Endothelial cell of umbilical vein (primary cell): ENCODE measurements at regions of chr7 and their contacts with region 1.

Region 1: GRCh38 chr7:141654551-141654950 is 47.4 kb downstream of the DENND11 start:
- DNase-seq: peak; percentile 94
- H3K4me3 ChIP-seq: no peak overlapping the region
- H3K27ac ChIP-seq: peak overlapping the region; percentile 46
- H3K4me1 ChIP-seq: peaks cover 16% of the 10 kb centered on the region
- H3K27me3 ChIP-seq: no peaks in the 10 kb centered on the region
- CTCF ChIP-seq: peak; percentile 81
- POLR2A ChIP-seq: no peak

Region 2: DNA sequence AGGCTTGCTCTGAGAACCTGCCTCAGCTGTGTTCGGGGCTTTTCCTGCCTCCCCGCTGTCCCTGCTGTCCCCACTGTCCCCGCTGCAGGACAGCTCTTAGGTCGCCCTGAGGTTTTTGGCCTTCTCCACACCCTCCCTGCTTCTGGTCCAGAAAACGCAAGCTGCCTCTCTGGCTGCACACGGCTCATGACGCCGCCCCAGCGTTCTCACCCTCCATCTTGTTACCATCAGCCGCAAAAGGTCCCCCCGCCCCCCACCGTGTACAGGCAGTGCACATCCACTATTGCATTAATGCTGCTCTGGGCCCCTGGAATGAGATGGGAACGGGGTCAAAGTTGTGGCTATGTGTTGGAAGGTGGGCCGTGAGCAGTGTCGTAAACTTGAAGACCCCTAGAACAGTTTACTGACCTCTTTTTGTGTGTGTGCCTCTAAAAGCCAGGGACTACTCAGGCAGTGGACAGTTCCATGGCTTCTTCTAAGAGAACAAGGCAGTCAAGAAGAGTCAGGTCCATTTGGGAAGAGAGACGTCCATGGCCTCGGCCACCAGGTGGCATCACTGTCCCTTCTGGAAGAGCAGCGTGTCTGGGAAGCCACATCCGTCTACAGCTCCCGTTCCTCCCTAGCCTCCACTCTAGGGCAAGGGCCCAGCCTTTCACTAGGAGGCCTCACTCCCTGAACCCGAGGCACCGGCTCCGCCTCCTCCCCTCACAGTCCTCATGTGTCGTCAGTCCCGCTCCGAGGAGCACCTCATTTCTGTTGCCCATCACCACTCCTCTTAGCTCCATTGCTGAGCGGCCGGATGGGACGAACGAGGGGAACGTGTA is 1136.8 kb before region 1 on chr7:
- CTCF ChIA-PET with region 1: interaction called, 11 read pairs
- POLR2A ChIA-PET with region 1: no interaction called
- dilution Hi-C with region 1: no loop called
- intact Hi-C with region 1: loop called (anchors 1 kb)
- DNase-seq: peak; percentile 79
- H3K4me3 ChIP-seq: no peak overlapping the region
- H3K27ac ChIP-seq: no peak overlapping the region
- H3K4me1 ChIP-seq: no peaks in the 10 kb centered on the region
- H3K27me3 ChIP-seq: no peaks in the 10 kb centered on the region
- CTCF ChIP-seq: peak; percentile 77 to 92
- POLR2A ChIP-seq: no peak

Region 3: GRCh38 chr7:140810830-140811556 is 843.6 kb before region 1 on chr7:
- CTCF ChIA-PET with region 1: interaction called, 51 read pairs
- POLR2A ChIA-PET with region 1: no interaction called
- dilution Hi-C with region 1: no loop called
- intact Hi-C with region 1: loop called (anchors 1 kb)
- DNase-seq: peak; percentile 77
- H3K4me3 ChIP-seq: no peak overlapping the region
- H3K27ac ChIP-seq: no peak overlapping the region
- H3K4me1 ChIP-seq: peaks cover 2% of the 10 kb centered on the region
- H3K27me3 ChIP-seq: no peaks in the 10 kb centered on the region
- CTCF ChIP-seq: peak; percentile 62 to 65
- POLR2A ChIP-seq: no peak

Region 4: DNA sequence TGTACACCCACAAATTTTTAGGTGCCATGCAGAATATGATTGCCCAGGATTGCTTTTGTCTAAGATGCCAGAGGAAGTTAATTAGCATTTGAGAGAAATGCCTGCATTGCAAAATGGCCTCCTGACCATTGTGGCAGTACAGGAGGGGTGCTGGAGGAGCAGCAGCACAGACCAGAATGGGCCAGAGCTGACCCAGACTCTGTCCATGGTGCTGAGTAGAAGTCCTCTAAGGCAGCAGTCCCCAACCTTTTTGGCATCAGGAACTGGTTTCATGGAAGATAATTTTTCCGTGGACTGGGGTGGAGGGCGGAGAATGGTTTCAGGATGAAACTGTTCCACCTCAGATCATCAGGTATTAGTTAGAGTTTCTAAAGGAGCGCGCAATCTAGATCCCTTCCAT is 321.1 kb before region 1 on chr7:
- CTCF ChIA-PET with region 1: no interaction called
- POLR2A ChIA-PET with region 1: no interaction called
- dilution Hi-C with region 1: no loop called
- intact Hi-C with region 1: no loop called
- DNase-seq: no peak
- H3K4me3 ChIP-seq: no peak overlapping the region
- H3K27ac ChIP-seq: no peak overlapping the region
- H3K4me1 ChIP-seq: no peaks in the 10 kb centered on the region
- H3K27me3 ChIP-seq: no peaks in the 10 kb centered on the region
- CTCF ChIP-seq: no peak
- POLR2A ChIP-seq: no peak

Region 5: GRCh38 chr7:141533149-141533949 is 121.2 kb before region 1 on chr7:
- CTCF ChIA-PET with region 1: interaction called, 23 read pairs
- POLR2A ChIA-PET with region 1: no interaction called
- dilution Hi-C with region 1: no loop called
- intact Hi-C with region 1: loop called (anchors 1 kb)
- DNase-seq: peak; percentile 67
- H3K4me3 ChIP-seq: no peak overlapping the region
- H3K27ac ChIP-seq: no peak overlapping the region
- H3K4me1 ChIP-seq: no peaks in the 10 kb centered on the region
- H3K27me3 ChIP-seq: peaks cover 0 to 4% of the 10 kb centered on the region in 2 experiments
- CTCF ChIP-seq: peak; percentile 91 to 97
- POLR2A ChIP-seq: no peak

Region 6: GRCh38 chr7:141668853-141669252 is 14.3 kb after region 1 on chr7:
- CTCF ChIA-PET with region 1: interaction called, 75 read pairs
- POLR2A ChIA-PET with region 1: no interaction called
- dilution Hi-C with region 1: no loop called
- intact Hi-C with region 1: loop called (anchors 1 kb)
- DNase-seq: no peak
- H3K4me3 ChIP-seq: no peak overlapping the region
- H3K27ac ChIP-seq: no peak overlapping the region
- H3K4me1 ChIP-seq: peaks cover 13% of the 10 kb centered on the region
- H3K27me3 ChIP-seq: no peaks in the 10 kb centered on the region
- CTCF ChIP-seq: no peak
- POLR2A ChIP-seq: no peak

Region 7: DNA sequence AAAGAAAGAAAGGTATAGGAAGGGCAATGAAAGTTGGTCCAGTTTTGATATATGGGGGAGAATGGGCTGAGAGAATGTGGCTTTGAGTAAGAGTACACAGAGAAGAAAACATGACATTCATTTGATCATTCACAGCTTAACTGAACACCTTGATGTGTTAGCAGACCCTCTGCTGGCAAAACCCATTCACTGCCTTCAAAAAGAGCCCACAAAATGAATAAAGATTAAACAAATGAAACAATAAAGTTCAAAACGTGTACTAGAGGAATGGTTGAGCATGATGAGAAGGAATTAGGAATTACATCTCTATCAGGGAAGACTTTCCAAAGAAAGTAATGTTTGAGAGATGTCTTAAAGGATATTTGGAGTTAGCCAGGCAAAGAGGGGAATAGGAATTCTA is 55.8 kb after region 1 on chr7:
- CTCF ChIA-PET with region 1: interaction called, 36 read pairs
- POLR2A ChIA-PET with region 1: no interaction called
- dilution Hi-C with region 1: no loop called
- intact Hi-C with region 1: no loop called
- DNase-seq: no peak
- H3K4me3 ChIP-seq: no peak overlapping the region
- H3K27ac ChIP-seq: no peak overlapping the region
- H3K4me1 ChIP-seq: no peaks in the 10 kb centered on the region
- H3K27me3 ChIP-seq: peaks cover 3 to 9% of the 10 kb centered on the region in 2 experiments
- CTCF ChIP-seq: no peak
- POLR2A ChIP-seq: no peak

Region 8: GRCh38 chr7:141820067-141820466 is 165.5 kb after region 1 on chr7:
- CTCF ChIA-PET with region 1: no interaction called
- POLR2A ChIA-PET with region 1: no interaction called
- dilution Hi-C with region 1: no loop called
- intact Hi-C with region 1: no loop called
- DNase-seq: no peak
- H3K4me3 ChIP-seq: no peak overlapping the region
- H3K27ac ChIP-seq: no peak overlapping the region
- H3K4me1 ChIP-seq: no peaks in the 10 kb centered on the region
- H3K27me3 ChIP-seq: no peaks in the 10 kb centered on the region
- CTCF ChIP-seq: no peak
- POLR2A ChIP-seq: no peak

Region 9: DNA sequence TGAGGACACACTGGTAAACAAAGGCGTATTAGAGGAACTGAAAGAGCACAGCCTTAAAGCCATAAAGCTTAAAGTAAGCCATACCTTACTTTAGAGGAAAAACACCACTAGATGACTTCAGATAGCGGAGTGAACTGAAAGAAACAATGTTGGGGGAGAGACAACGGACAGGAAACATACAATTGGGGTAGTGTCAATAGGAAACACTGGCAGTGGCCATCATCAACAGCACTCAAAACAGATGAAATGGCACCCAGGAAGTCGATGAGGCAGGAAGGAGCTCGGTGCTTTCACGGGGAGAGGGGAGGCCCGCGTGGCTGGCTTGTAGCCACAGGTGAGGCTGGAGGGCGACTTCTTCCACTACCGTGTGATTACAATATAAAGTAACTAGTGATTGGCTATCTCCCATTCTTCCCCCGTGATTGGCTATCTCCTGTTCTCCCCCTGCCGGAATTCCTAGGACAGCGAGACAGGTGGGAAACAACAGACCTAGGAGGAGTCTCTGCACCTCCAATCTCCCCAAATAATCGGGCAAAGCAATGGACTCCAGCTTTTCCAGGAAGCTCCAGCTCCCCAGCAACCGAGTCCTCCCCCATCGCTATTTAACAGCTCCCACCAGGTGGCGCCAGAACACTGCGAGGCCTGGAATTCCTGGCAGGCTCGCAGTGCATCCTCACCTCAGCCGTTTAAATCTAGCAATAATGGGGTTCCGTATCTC is 321.4 kb after region 1 on chr7:
- CTCF ChIA-PET with region 1: no interaction called
- POLR2A ChIA-PET with region 1: no interaction called
- dilution Hi-C with region 1: no loop called
- intact Hi-C with region 1: loop called (anchors 5 kb)
- DNase-seq: peak; percentile 12
- H3K4me3 ChIP-seq: no peak overlapping the region
- H3K27ac ChIP-seq: no peak overlapping the region
- H3K4me1 ChIP-seq: no peaks in the 10 kb centered on the region
- H3K27me3 ChIP-seq: no peaks in the 10 kb centered on the region
- CTCF ChIP-seq: peak; percentile 63 to 73
- POLR2A ChIP-seq: no peak